ENCODE measurements at regions of chr6 and their contacts with region 1.

Region 1: DNA sequence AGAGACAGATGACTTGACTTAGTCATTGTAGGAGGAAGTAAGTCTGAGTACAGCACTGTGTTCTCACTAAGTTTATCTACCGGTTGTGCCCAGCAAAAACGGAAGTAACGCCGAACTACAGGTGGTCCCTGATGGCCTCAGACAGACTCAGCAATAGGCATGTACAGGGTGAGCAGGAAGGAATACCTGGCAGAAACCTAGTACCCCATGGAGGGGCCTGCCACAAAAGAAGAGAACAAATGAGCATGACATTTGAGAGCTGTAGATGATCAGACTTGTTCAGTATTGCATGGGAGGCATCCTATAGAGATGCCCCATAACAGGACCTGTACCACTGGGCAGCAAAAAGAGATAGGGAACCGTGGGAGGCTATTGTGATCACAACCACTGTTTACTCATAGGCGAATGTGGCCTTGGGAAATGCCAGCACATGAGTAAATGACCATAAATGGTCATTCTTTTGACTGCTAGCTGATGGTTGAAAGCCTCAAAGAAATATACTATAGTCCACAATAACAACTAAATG is 106.4 kb upstream of the TAB2 start:
- DNase-seq: peak; percentile 54
- H3K4me3 Mint-ChIP-seq: peak overlapping the region; percentile 53
- H3K27ac Mint-ChIP-seq: no peak overlapping the region
- H3K4me1 Mint-ChIP-seq: peaks cover 22% of the 10 kb centered on the region
- H3K27me3 Mint-ChIP-seq: no peaks in the 10 kb centered on the region

Region 2: GRCh38 chr6:149075616-149076364 is 135.3 kb before region 1 on chr6:
- CTCF ChIA-PET with region 1: no interaction called
- POLR2A ChIA-PET with region 1: no interaction called
- intact Hi-C with region 1: loop called (anchors 2 kb)
- DNase-seq: peak; percentile 51
- H3K4me3 Mint-ChIP-seq: peak overlapping the region; percentile 7
- H3K27ac Mint-ChIP-seq: peak overlapping the region; percentile 93
- H3K4me1 Mint-ChIP-seq: peaks cover 40% of the 10 kb centered on the region
- H3K27me3 Mint-ChIP-seq: no peaks in the 10 kb centered on the region

Region 3: DNA sequence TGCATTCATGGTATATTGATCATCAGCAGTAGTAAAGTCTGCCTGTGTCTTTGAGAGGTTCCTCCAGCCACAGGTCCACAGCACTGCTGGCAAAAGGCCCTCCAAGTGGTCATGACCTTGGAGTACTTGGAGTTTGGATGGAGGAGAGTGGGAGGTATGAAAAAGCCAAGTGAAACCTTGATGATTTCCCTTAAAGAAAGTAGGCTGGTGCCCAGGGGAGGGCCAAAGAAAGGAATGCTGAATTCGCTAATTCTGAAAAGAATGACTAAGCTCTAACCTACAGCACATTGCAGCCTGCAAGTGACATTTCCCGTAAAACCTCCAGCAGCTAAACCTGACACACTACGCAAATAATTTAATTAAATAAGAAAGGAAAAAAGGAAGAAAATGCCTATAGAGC is 117.0 kb before region 1 on chr6:
- CTCF ChIA-PET with region 1: no interaction called
- POLR2A ChIA-PET with region 1: interaction called, 13 read pairs
- intact Hi-C with region 1: no loop called
- DNase-seq: peak; percentile 51
- H3K4me3 Mint-ChIP-seq: peak overlapping the region; percentile 45
- H3K27ac Mint-ChIP-seq: peak overlapping the region; percentile 93
- H3K4me1 Mint-ChIP-seq: peaks cover 67% of the 10 kb centered on the region
- H3K27me3 Mint-ChIP-seq: no peaks in the 10 kb centered on the region

Region 4: GRCh38 chr6:149129371-149130077 is 81.6 kb before region 1 on chr6:
- CTCF ChIA-PET with region 1: no interaction called
- POLR2A ChIA-PET with region 1: no interaction called
- intact Hi-C with region 1: no loop called
- DNase-seq: peak; percentile 64
- H3K4me3 Mint-ChIP-seq: no peak overlapping the region
- H3K27ac Mint-ChIP-seq: peak overlapping the region; percentile 90
- H3K4me1 Mint-ChIP-seq: peaks cover 65% of the 10 kb centered on the region
- H3K27me3 Mint-ChIP-seq: no peaks in the 10 kb centered on the region

Region 5: GRCh38 chr6:149190224-149190831 is 20.8 kb before region 1 on chr6:
- CTCF ChIA-PET with region 1: interaction called, 4 read pairs
- POLR2A ChIA-PET with region 1: no interaction called
- intact Hi-C with region 1: loop called (anchors 2 kb)
- DNase-seq: peak; percentile 84
- H3K4me3 Mint-ChIP-seq: no peak overlapping the region
- H3K27ac Mint-ChIP-seq: peak overlapping the region; percentile 16
- H3K4me1 Mint-ChIP-seq: peaks cover 41% of the 10 kb centered on the region
- H3K27me3 Mint-ChIP-seq: no peaks in the 10 kb centered on the region

Region 6: DNA sequence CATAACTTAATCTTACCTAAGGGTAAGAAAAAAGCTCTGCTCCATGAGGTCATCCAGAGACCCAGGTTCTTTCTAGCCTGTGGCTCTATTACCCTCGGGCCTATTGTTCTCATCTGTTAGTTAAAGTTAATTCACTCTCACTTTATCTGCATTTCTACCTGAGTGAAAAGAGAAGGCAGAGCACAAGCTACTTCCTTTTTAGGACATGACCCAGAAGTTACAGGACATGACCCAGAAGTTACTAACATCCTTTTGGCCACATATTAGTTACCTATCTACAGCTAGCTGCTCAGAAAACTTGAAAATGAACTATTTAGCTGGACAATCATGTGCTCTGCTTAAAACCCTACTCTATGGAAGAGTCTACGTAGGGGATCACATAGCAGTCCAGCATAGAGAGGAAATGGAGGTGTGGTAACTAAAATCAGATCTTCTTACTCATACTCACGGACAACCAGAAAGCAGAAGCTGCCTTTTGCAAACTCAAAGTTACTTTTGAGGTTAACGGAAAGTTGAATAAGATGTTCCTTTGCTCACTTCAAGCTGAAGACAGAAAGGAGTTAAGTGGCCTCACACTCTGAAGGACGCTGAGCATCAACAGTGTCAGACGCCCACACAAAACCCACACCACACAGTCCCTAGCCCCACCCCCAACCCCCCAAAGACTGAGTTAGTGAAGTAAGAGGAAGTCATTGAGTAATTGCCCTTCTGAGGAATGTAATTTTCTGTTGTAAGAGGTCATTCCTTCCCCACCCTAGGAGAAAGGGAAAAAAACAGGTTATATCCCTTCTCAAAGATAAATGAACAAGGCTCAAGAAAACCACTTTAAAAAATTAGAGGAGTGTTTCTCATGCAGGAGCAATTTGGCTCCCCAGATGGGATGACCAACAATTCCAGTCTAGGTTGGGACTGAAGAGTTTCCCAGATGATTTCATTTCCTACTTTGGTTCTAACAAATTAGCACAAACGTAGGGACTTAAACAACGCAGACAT is 60.5 kb after region 1 on chr6:
- CTCF ChIA-PET with region 1: interaction called, 3 read pairs
- POLR2A ChIA-PET with region 1: interaction called, 6 read pairs
- intact Hi-C with region 1: loop called (anchors 2 kb)
- DNase-seq: peak; percentile 85
- H3K4me3 Mint-ChIP-seq: peak overlapping the region; percentile 45
- H3K27ac Mint-ChIP-seq: peak overlapping the region; percentile 93
- H3K4me1 Mint-ChIP-seq: peaks cover 35% of the 10 kb centered on the region
- H3K27me3 Mint-ChIP-seq: no peaks in the 10 kb centered on the region

Region 7: GRCh38 chr6:149508485-149508884 is 297.4 kb after region 1 on chr6:
- CTCF ChIA-PET with region 1: no interaction called
- POLR2A ChIA-PET with region 1: no interaction called
- intact Hi-C with region 1: loop called (anchors 10 kb)
- DNase-seq: peak; percentile 68
- H3K4me3 Mint-ChIP-seq: peak overlapping the region; percentile 50
- H3K27ac Mint-ChIP-seq: peak overlapping the region; percentile 95
- H3K4me1 Mint-ChIP-seq: peaks cover 70% of the 10 kb centered on the region
- H3K27me3 Mint-ChIP-seq: no peaks in the 10 kb centered on the region

Measured in activated CD4-positive, alpha-beta memory T cell treated with anti-CD3 and anti-CD28 coated beads for 36 hours (primary cell).